Posterior vena cava (tissue), 2 donors: ENCODE measurements at regions of chr20 and their contacts with region 1.

Region 1: DNA sequence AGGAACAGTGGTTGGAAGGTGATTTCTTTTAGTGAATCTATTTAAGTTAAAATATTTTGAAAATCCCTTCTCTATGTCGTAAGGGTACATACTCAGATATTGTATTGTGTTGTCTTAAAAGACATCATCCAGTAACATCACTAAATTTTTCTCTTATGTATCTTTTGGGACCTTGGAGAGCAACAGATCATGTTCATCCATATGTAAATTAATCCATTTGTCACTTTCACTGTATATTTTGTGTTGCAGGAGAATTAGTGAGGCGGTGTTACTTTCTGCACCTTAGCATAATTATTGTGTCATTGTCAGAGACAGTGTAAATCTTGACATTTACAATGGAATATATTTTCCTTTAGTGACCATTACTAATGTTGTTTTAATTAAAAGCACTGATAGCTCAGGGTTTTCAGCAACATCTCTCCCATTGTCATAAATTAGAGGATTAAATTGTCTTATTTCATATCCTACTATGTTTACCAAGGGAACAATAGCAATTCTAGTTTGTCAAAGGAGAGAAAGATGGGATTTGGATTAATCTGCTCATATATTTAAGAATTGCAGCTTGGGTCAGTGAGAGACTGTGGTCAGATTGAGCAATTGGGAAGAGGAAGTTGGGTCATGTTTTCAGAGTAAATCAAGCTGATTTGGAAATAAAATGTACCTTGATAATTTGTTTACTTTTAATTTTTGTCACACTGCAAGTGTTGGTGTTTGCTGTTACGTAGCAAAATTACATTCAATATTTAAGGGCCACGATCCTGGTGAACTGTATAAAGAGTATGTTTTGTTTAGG is 22.7 kb downstream of the DOK5 start:
- DNase-seq: no peak

Region 2: GRCh38 chr20:54449158-54449557 is 49.0 kb before region 1 on chr20:
- intact Hi-C with region 1: loop called in 1 of 2 experiments (anchors 10 kb)
- DNase-seq: no peak